Activated CD4-positive, alpha-beta T cell treated with anti-CD3 and anti-CD28 coated beads for 36 hours (primary cell): ENCODE measurements at regions of chr12 and their contacts with region 1.

Region 1: GRCh38 chr12:111942557-111942956 is 70.4 kb downstream of the TMEM116 start:
- DNase-seq: peak; percentile 7
- ATAC-seq: no peak
- H3K4me3 Mint-ChIP-seq: no peak overlapping the region
- H3K27ac Mint-ChIP-seq: peak overlapping the region; percentile 77
- H3K4me1 Mint-ChIP-seq: peaks cover 15% of the 10 kb centered on the region
- H3K27me3 Mint-ChIP-seq: no peaks in the 10 kb centered on the region

Region 2: GRCh38 chr12:110896559-110896958 is 1046.0 kb before region 1 on chr12:
- CTCF ChIA-PET with region 1: no interaction called
- POLR2A ChIA-PET with region 1: no interaction called
- intact Hi-C with region 1: no loop called
- DNase-seq: no peak
- ATAC-seq: no peak
- H3K4me3 Mint-ChIP-seq: no peak overlapping the region
- H3K27ac Mint-ChIP-seq: no peak overlapping the region
- H3K4me1 Mint-ChIP-seq: peaks cover 5% of the 10 kb centered on the region
- H3K27me3 Mint-ChIP-seq: peaks cover 13% of the 10 kb centered on the region

Region 3: GRCh38 chr12:112022241-112023016 is 79.9 kb after region 1 on chr12:
- CTCF ChIA-PET with region 1: interaction called, 10 read pairs
- POLR2A ChIA-PET with region 1: no interaction called
- intact Hi-C with region 1: no loop called
- DNase-seq: no peak
- ATAC-seq: no peak
- H3K4me3 Mint-ChIP-seq: no peak overlapping the region
- H3K27ac Mint-ChIP-seq: peak overlapping the region; percentile 10
- H3K4me1 Mint-ChIP-seq: peaks cover 46% of the 10 kb centered on the region
- H3K27me3 Mint-ChIP-seq: no peaks in the 10 kb centered on the region

Region 4: DNA sequence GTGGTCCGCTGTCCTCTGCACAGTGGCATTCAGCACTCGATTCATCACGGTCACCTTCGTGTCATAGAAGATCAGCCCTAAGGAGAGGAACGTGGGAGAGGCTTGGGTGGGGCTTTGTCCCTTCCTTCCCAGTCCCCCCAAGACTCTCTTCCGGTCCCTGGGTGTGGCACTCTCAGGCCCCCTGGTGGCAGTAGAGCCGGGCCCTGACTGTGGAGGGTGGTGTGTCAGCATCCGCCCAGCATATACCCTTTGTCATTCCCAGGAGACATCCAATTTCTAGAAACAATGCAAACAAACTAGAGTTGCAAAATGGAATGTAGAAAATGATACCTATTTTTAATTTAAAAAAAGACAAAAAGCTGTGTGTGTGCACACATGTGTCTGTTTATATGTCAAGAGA is 227.8 kb after region 1 on chr12:
- CTCF ChIA-PET with region 1: interaction called, 4 read pairs
- POLR2A ChIA-PET with region 1: no interaction called
- intact Hi-C with region 1: loop called in 1 of 2 experiments (anchors 1 kb)
- DNase-seq: peak; percentile 52
- ATAC-seq: peak; percentile 61
- H3K4me3 Mint-ChIP-seq: no peak overlapping the region
- H3K27ac Mint-ChIP-seq: no peak overlapping the region
- H3K4me1 Mint-ChIP-seq: no peaks in the 10 kb centered on the region
- H3K27me3 Mint-ChIP-seq: no peaks in the 10 kb centered on the region